ENCODE measurements at regions of chr4 and their contacts with region 1.

Region 1: GRCh38 chr4:138035781-138036258 is 206.3 kb downstream of the SLC7A11 start:
- DNase-seq: peak; percentile 54
- H3K4me3 ChIP-seq: no peak overlapping the region
- H3K27ac ChIP-seq: peak overlapping the region; percentile 76
- H3K4me1 ChIP-seq: peaks cover 21% of the 10 kb centered on the region
- H3K27me3 ChIP-seq: no peaks in the 10 kb centered on the region
- CTCF ChIP-seq: peak; percentile 48 to 68

Region 2: GRCh38 chr4:137735561-137736104 is 300.2 kb before region 1 on chr4:
- CTCF ChIA-PET with region 1: no interaction called
- dilution Hi-C with region 1: no loop called
- in situ Hi-C with region 1: no loop called
- intact Hi-C with region 1: loop called (anchors 1 kb)
- DNase-seq: no peak
- H3K4me3 ChIP-seq: no peak overlapping the region
- H3K27ac ChIP-seq: no peak overlapping the region
- H3K4me1 ChIP-seq: no peaks in the 10 kb centered on the region
- H3K27me3 ChIP-seq: no peaks in the 10 kb centered on the region
- CTCF ChIP-seq: no peak

Region 3: GRCh38 chr4:138090150-138090917 is 54.5 kb after region 1 on chr4:
- CTCF ChIA-PET with region 1: interaction called, 9 read pairs
- dilution Hi-C with region 1: no loop called
- in situ Hi-C with region 1: loop called (anchors 5 kb)
- intact Hi-C with region 1: loop called (anchors 1 kb)
- DNase-seq: peak; percentile 75
- H3K4me3 ChIP-seq: peak overlapping the region; percentile 13 to 26 (median 13)
- H3K27ac ChIP-seq: no peak overlapping the region
- H3K4me1 ChIP-seq: peaks cover 5% of the 10 kb centered on the region
- H3K27me3 ChIP-seq: no peaks in the 10 kb centered on the region
- CTCF ChIP-seq: peak; percentile 67 to 71

Region 4: GRCh38 chr4:138182838-138183426 is 147.1 kb after region 1 on chr4:
- CTCF ChIA-PET with region 1: interaction called, 4 read pairs
- dilution Hi-C with region 1: no loop called
- in situ Hi-C with region 1: loop called in 1 of 2 experiments (anchors 25 kb)
- intact Hi-C with region 1: loop called (anchors 2 kb)
- DNase-seq: peak; percentile 45
- H3K4me3 ChIP-seq: no peak overlapping the region
- H3K27ac ChIP-seq: no peak overlapping the region
- H3K4me1 ChIP-seq: peaks cover under 1% of the 10 kb centered on the region
- H3K27me3 ChIP-seq: no peaks in the 10 kb centered on the region
- CTCF ChIP-seq: peak; percentile 59 to 70

Region 5: GRCh38 chr4:138522366-138522765 is 486.5 kb after region 1 on chr4:
- CTCF ChIA-PET with region 1: no interaction called
- dilution Hi-C with region 1: no loop called
- in situ Hi-C with region 1: no loop called
- intact Hi-C with region 1: loop called (anchors 1 kb)
- DNase-seq: peak; percentile 30
- H3K4me3 ChIP-seq: no peak overlapping the region
- H3K27ac ChIP-seq: no peak overlapping the region
- H3K4me1 ChIP-seq: no peaks in the 10 kb centered on the region
- H3K27me3 ChIP-seq: no peaks in the 10 kb centered on the region
- CTCF ChIP-seq: peak; percentile 44 to 73

Region 6: GRCh38 chr4:138595731-138596460 is 560.1 kb after region 1 on chr4:
- CTCF ChIA-PET with region 1: no interaction called
- dilution Hi-C with region 1: no loop called
- in situ Hi-C with region 1: no loop called
- intact Hi-C with region 1: no loop called
- DNase-seq: no peak
- H3K4me3 ChIP-seq: no peak overlapping the region
- H3K27ac ChIP-seq: no peak overlapping the region
- H3K4me1 ChIP-seq: no peaks in the 10 kb centered on the region
- H3K27me3 ChIP-seq: peaks cover 2% of the 10 kb centered on the region
- CTCF ChIP-seq: no peak

Region 7: DNA sequence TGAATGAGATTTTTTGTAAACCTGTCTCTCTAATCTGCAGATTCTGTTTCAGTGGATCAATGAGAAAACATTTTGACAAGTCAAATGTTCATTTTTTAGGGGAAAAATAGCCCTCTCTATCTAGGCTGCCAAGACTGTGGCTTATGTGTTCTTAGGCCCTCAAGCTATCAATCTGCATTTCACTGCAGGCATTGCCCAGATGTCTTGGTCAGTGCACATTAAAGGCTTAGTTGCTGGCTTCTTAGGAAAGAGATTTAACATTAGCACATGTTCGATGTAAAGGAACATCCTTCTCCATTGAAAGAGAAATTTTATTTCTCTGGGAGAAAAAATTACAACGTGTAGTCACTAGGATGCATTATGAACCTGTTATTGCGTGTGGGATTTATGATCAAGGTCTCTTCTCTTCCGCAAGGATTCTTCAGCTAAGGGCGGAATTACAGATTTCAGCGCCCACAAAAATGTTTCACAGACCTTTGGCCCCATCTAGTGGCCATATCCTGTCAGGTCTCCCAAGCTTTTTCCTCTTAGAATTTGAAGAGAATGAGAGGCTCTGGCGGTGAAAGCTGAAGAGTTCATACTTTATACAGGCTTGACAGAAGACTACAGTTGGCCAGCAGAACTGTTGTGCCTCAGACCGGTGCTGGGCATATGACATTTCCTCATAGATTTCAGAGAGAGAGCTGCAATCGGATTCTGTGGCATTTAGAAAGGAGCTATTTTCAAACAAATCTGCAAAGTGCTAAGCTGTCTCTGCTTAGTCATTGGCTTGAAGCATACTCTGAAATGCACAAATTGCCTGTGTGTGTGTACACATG is 835.1 kb after region 1 on chr4:
- CTCF ChIA-PET with region 1: no interaction called
- dilution Hi-C with region 1: no loop called
- in situ Hi-C with region 1: no loop called
- intact Hi-C with region 1: loop called (anchors 1 kb)
- DNase-seq: peak; percentile 52
- H3K4me3 ChIP-seq: no peak overlapping the region
- H3K27ac ChIP-seq: no peak overlapping the region
- H3K4me1 ChIP-seq: peaks cover 6% of the 10 kb centered on the region
- H3K27me3 ChIP-seq: no peaks in the 10 kb centered on the region
- CTCF ChIP-seq: peak; percentile 79 to 80